ENCODE measurements at regions of chr19 and their contacts with region 1.

Region 1: DNA sequence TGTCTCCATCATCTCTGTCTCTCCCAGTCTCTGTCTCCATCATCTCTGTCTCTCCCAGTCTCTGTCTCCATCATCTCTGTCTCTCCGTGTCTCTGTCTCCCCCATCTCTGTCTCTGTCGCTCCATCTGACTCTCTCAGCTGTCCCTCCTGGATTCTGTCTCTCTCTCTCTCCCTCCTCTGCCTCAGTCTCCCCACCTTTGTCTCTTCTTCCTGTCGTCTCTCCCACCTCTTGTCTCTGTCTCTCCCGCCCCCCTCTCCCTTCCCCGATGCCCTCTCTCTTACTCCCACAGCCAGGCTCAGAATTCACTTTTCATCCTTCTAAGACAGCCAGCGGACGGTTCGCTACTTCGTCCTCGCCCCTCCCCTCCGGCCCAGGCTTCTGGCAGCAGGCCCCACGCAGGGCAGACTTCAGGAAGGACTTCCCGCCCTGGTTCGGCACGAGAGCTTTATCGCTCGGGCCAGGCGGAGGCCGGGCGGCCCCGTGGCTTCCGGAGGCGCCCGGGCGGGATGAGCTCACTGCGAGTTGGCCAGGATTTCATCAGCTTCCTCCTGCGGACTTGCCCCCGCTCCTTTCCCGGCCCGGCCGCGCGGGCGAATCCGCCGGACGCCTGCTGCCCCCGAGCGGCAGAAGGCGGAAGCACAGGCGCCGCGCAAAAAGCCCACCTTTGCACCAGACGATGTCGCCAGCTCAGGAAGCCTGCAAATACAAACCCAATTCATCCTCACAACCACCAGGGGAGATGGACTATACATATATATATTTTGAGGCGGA is 12.4 kb upstream of the CCDC9 start:
- H3K4me3 ChIP-seq: peak overlapping the region; percentile 19
- H3K27ac ChIP-seq: peak overlapping the region; percentile 65
- H3K4me1 ChIP-seq: peaks cover 7% of the 10 kb centered on the region
- CTCF ChIP-seq: peak; percentile 99

Region 2: DNA sequence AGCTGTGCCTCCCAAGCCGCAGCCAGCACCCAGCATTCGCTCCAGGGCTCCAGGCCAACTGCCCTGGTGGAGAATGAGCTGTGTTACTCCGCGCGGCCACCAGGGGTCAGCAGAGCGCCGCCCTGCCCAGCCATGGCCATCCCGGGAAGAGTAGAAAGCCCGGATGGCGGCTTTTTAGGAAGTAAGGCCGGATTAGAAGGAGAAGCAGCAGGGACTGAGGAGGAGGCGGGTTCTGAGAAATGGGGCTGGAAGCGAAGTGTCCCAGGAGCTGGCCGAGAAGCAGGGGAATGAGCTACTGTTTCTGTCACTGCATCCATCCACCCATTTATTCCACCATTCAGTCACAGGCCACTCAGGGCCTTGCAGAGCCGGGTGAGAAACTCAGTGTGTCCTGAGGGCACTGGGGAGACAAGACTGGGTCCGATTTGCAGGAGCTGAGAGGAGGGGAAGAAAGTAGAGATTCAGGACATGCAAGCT is 230.9 kb before region 1 on chr19:
- CTCF ChIA-PET with region 1: interaction called, 20 read pairs
- POLR2A ChIA-PET with region 1: no interaction called
- H3K4me3 ChIP-seq: no peak overlapping the region
- H3K27ac ChIP-seq: no peak overlapping the region
- H3K4me1 ChIP-seq: no peaks in the 10 kb centered on the region
- CTCF ChIP-seq: peak; percentile 95

Region 3: DNA sequence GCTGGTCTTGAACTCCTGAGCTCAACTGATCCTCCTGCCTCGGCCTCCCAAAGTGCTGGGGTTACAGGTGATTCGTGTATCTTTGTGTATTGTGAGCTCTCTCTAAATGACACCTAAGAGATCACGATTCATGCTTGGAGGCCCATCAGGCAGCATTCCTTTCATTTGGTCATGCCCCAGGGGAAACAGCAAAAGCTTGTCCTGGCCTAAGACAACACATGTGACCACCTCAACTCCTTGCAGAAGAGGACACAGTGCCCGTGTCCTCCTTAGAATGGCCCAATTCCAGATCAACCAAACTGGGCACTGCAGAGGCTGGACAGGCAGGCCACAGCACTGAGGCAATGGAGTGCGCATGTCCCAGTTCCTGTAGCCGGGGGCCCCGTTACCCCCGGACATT is 162.9 kb before region 1 on chr19:
- CTCF ChIA-PET with region 1: interaction called, 15 read pairs
- POLR2A ChIA-PET with region 1: interaction called, 4 read pairs
- H3K4me3 ChIP-seq: no peak overlapping the region
- H3K27ac ChIP-seq: peak overlapping the region; percentile 37; the same call in 1 of the 2 replicates
- H3K4me1 ChIP-seq: no peaks in the 10 kb centered on the region
- CTCF ChIP-seq: no peak

Region 4: DNA sequence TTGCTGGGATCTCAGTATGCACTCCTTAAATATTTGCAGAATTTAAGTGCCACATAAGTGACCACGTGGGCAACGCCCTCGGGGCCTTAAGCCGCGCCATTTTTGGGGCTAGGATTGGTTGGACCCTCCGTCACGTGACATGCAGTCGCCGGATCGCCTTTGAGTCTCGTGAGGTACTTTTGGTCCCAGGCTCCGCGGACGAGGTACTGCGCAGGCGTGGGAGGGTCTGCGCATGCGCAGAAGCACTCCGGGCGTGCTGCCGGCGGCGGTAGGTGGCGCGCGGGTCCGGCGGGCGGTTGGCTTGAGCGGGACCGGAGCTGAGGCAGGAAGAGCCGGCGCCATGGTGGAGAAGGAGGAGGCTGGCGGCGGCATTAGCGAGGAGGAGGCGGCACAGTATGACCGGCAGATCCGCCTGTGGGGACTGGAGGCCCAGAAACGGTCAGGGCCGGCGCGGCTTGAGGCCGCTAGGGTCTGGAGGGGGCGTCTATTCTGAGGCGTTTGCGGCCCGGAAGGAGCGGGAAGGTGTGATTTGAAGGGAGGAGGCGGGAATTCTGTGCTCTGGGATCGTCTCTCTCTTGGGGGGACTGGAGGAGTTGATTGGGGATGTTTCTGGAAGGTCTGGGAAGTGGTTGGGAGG is 113.3 kb before region 1 on chr19 and contains the start of gene SAE1:
- CTCF ChIA-PET with region 1: interaction called, 8 read pairs
- POLR2A ChIA-PET with region 1: interaction called, 11 read pairs
- H3K4me3 ChIP-seq: peak within 1 kb of the TSS; percentile 75
- H3K27ac ChIP-seq: peak within 1 kb of the TSS; percentile 92
- H3K4me1 ChIP-seq: peaks cover 22% of the 10 kb centered on the region
- CTCF ChIP-seq: peak; percentile 97

Region 5: DNA sequence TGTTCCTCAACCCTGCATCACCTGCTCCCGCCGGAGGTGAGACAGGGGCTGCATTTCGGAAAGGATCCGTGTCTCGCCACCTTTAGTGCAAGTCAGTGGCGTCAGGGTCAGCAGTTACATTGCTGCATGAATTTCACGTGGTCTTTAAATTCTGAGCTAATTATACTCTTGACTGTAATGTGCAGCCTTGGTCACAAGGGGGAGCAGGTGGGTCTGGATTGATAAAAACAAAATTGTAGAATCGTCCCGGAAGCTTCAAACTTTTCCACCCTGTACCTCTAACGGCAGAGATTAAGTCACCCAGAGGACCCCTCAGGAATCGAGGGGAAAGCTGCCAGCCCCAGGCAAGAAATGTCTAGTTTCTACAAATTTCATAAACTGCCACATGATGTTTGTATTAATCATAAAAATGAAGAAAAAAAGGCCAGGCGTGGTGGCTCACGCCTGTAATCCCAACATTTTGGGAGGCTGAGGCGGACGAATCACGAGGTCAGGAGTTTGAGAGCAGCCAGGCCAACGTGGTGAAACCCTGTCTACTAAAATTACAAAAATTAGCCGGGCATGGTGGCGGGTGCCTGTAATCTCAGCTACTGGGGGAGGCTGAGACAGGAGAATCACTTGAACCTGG is 33.2 kb before region 1 on chr19:
- CTCF ChIA-PET with region 1: interaction called, 316 read pairs
- POLR2A ChIA-PET with region 1: interaction called, 65 read pairs
- H3K4me3 ChIP-seq: no peak overlapping the region
- H3K27ac ChIP-seq: no peak overlapping the region
- H3K4me1 ChIP-seq: peaks cover 3% of the 10 kb centered on the region; the same call in 1 of the 2 replicates
- CTCF ChIP-seq: peak; percentile 52; the same call in 1 of the 2 replicates

Region 6: DNA sequence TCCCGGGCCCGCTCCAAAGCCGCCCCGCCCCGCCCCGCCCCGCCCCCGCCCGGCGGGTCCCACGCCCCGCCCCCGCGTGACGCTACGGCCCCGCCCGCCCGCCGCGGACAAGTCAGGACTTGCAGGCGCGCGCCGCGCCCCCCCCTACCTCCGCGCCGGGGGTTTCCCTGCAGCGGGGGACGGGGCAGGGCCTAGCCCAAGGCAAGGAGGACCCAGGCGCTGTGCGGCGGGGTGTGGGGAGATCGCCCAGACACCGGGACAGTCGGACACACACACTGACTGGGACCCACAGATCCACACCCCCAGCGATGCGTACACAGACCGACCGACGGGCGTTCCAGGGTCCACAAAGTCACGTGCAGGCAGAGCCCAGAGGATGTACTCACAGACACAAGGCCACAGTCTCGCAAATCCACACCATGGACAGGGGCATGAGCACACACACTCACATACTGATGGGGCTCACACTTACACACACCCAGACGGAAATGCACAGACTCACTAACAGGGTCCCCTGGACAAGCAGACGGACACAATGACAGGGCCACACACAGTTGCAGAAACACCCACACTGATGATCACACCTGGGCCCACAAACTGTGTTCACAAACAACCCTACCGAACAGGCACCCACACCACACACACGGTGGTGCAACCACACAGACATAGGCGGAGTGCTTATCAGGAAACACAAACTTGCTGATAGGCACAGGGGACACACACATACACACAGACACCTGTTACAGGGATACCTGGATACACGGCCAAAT is 12.6 kb before region 1 on chr19:
- CTCF ChIA-PET with region 1: interaction called, 86 read pairs
- POLR2A ChIA-PET with region 1: interaction called, 112 read pairs
- H3K4me3 ChIP-seq: peak overlapping the region; percentile 17
- H3K27ac ChIP-seq: peak overlapping the region; percentile 95
- H3K4me1 ChIP-seq: peaks cover 26% of the 10 kb centered on the region
- CTCF ChIP-seq: 0 out of 2 replicates have a peak, but pooled peaks have one; percentile 30

Region 7: GRCh38 chr19:47267350-47267759 is 23.4 kb after region 1 on chr19:
- CTCF ChIA-PET with region 1: interaction called, 11 read pairs
- POLR2A ChIA-PET with region 1: no interaction called
- H3K4me3 ChIP-seq: no peak overlapping the region
- H3K27ac ChIP-seq: no peak overlapping the region
- H3K4me1 ChIP-seq: no peaks in the 10 kb centered on the region
- CTCF ChIP-seq: no peak

Measured in HEK293 (cell line).